ENCODE measurements at regions of chr7 and their contacts with region 1.

Region 1: GRCh38 chr7:43647673-43648472 is 65.0 kb downstream of the STK17A start:
- DNase-seq: peak in 2 of 10 donors; percentile 27 to 36
- ATAC-seq: peak in 1 of 2 donors; percentile 10
- H3K4me3 Mint-ChIP-seq: peak overlapping the region; percentile 77 to 91 (median 86)
- H3K27ac Mint-ChIP-seq: peak overlapping the region in 9 of 10 donors; percentile 93 to 100 (median 99)
- H3K4me1 Mint-ChIP-seq: peaks cover 47 to 98% (median 93%) of the 10 kb centered on the region in 4 donors
- H3K27me3 Mint-ChIP-seq: no peaks in the 10 kb centered on the region

Region 2: GRCh38 chr7:43619213-43620012 is 28.5 kb before region 1 on chr7:
- POLR2A ChIA-PET with region 1: interaction called, 59 read pairs
- DNase-seq: no peak
- ATAC-seq: no peak
- H3K4me3 Mint-ChIP-seq: no peak overlapping the region
- H3K27ac Mint-ChIP-seq: no peak overlapping the region
- H3K4me1 Mint-ChIP-seq: peaks cover 26 to 56% (median 32%) of the 10 kb centered on the region in 4 donors
- H3K27me3 Mint-ChIP-seq: no peaks in the 10 kb centered on the region

Region 3: GRCh38 chr7:43658718-43659548 is 11.1 kb after region 1 on chr7:
- POLR2A ChIA-PET with region 1: interaction called, 16 read pairs
- DNase-seq: no peak
- ATAC-seq: peak; percentile 30 to 45
- H3K4me3 Mint-ChIP-seq: peak overlapping the region; percentile 27 to 83 (median 57)
- H3K27ac Mint-ChIP-seq: peak overlapping the region; percentile 37 to 94 (median 86)
- H3K4me1 Mint-ChIP-seq: peaks cover 35 to 57% (median 54%) of the 10 kb centered on the region in 4 donors
- H3K27me3 Mint-ChIP-seq: no peaks in the 10 kb centered on the region

Region 4: GRCh38 chr7:43677864-43678263 is 30.0 kb after region 1 on chr7:
- POLR2A ChIA-PET with region 1: interaction called, 10 read pairs
- DNase-seq: no peak
- ATAC-seq: no peak
- H3K4me3 Mint-ChIP-seq: peak overlapping the region in 7 of 10 donors; percentile 6 to 64 (median 55)
- H3K27ac Mint-ChIP-seq: peak overlapping the region in 7 of 10 donors; percentile 63 to 94 (median 73)
- H3K4me1 Mint-ChIP-seq: peaks cover 32 to 85% (median 72%) of the 10 kb centered on the region in 4 donors
- H3K27me3 Mint-ChIP-seq: no peaks in the 10 kb centered on the region

Region 5: DNA sequence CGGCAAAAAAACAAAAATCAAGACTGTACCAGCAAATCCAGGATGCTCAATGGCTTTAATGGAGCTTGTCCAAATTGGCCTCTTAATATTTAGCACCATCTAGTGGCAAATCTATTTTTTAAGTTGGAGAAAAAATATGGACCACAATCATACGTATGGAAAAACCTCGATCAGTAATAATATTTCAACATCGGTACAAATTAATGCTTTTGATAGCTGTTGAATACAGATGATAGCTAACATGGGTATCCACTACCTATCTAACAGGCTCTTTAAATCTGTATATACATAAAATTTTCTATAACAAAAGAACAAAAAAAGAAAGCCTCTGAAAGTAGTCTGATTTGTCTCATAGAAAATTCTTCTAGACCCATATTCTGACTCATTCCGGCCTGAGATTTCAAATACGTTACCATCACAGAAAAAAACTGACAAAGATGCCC is 52.2 kb after region 1 on chr7:
- POLR2A ChIA-PET with region 1: interaction called, 56 read pairs
- DNase-seq: peak in 4 of 10 donors; percentile 7 to 78 (median 71)
- ATAC-seq: peak; percentile 61 to 75
- H3K4me3 Mint-ChIP-seq: peak overlapping the region; percentile 40 to 78 (median 58)
- H3K27ac Mint-ChIP-seq: peak overlapping the region; percentile 54 to 88 (median 84)
- H3K4me1 Mint-ChIP-seq: peaks cover 20 to 49% (median 42%) of the 10 kb centered on the region in 4 donors
- H3K27me3 Mint-ChIP-seq: no peaks in the 10 kb centered on the region

Region 6: GRCh38 chr7:43735802-43736541 is 88.1 kb after region 1 on chr7:
- POLR2A ChIA-PET with region 1: no interaction called
- DNase-seq: no peak
- ATAC-seq: no peak
- H3K4me3 Mint-ChIP-seq: no peak overlapping the region
- H3K27ac Mint-ChIP-seq: no peak overlapping the region
- H3K4me1 Mint-ChIP-seq: peaks cover 0 to 2% (median 0%) of the 10 kb centered on the region in 4 donors
- H3K27me3 Mint-ChIP-seq: peaks cover 0 to 2% (median 0%) of the 10 kb centered on the region in 5 donors